Activated naive CD4-positive, alpha-beta T cell treated with anti-CD3 and anti-CD28 coated beads for 36 hours (primary cell): ENCODE measurements at regions of chr17 and their contacts with region 1.

Region 1: GRCh38 chr17:5191541-5192417 is at the start of gene ZNF594:
- DNase-seq: peak; percentile 98
- H3K4me3 Mint-ChIP-seq: peak within 1 kb of the TSS; percentile 90
- H3K27ac Mint-ChIP-seq: peak within 1 kb of the TSS; percentile 82
- H3K4me1 Mint-ChIP-seq: peaks cover 31% of the 10 kb centered on the region
- H3K27me3 Mint-ChIP-seq: no peaks in the 10 kb centered on the region
- total RNA-seq, gene ZNF594: 3.9 to 4.1 TPM

Region 2: DNA sequence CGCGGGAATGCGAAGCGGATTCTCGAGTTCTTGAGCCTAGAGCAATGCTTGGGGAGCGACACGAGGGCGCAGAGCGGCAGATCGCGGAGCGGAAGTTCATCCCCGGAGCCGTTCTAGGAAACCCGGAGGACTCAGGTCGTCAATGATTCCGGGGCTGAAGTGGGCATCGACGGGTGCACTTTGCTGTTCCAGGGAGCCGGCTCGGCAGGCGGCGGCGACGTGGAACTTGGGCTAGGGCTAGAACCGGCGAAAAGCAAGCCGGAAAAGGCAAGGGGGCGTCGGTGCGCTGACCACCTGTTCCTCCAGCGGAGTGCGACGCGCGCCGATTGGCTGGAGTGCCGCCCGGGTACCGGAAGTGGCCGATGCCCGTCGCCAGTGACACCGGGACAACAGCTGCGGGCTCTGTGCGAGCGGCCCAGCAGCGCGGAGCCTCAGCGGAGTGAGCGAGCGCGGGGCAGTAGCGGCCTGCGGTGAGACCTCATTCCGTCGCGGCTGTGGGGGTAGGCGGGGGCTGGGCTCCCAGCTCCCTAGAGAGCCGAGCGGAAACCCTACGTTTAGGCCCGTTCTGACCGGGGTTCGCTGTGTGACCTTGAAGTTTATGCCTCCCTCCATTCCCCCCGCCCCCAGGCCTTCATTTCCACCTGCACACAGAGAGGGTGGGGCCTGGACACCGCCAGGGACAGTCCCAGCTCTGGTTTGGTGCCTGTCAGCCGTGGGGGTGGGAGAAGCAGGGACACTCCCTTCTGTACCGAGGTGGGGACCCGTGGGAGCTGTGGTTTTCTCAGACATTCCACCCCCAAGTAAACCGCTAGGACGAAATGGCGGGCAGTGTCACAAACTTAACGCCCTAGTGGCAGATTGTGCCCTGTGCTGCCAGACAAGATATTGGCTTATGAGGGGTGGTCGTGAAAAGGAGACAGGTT is 113.4 kb before region 1 on chr17 and contains the start of gene ZFP3:
- CTCF ChIA-PET with region 1: interaction called, 4 read pairs
- intact Hi-C with region 1: loop called (anchors 5 kb)
- DNase-seq: peak; percentile 80
- H3K4me3 Mint-ChIP-seq: peak within 1 kb of the TSS; percentile 89
- H3K27ac Mint-ChIP-seq: peak within 1 kb of the TSS; percentile 85
- H3K4me1 Mint-ChIP-seq: peaks cover 22% of the 10 kb centered on the region
- H3K27me3 Mint-ChIP-seq: no peaks in the 10 kb centered on the region
- total RNA-seq, gene ZFP3: 0.62 to 0.83 TPM

Region 3: DNA sequence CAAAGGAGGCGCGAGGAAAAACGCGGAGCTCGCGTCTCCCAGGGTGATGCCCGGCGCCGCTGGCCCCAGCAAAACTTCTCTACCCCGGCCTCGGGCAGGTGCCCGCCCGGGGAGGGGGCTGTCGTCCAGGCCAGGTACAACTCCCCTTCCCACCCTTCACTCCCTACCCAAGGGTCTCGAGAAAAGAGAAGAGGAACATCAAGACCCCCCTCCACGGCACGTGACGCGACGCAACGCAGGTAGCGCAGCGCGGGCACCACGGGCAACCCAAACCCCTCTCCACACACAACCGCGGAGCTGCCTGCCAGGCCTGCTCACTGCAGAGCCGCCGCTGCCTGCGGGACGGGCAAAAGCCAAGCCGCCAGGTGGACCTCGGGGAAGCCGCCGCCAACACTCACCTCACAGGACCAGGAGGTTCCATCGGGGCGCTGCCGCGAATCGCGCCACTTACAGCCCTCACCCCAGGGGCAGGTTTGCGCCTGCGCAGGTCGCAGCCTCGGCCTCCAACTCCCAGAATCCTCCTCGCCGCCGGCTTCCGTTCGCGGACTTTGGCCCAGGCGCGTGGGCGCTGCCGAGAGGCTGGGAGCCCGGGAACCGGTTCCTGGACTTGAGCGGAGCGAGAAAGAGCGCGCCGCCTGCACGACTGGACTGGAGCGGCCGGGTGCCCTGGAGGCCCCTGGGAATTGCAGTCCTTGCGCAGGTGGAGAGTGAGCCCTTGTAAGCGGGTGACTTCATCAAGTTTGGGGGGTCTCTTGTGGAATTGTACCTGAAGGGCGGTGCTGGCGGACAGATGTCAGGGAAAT is 80.2 kb before region 1 on chr17 and contains the start of gene ZNF232:
- CTCF ChIA-PET with region 1: no interaction called
- intact Hi-C with region 1: loop called (anchors 1 kb)
- DNase-seq: peak; percentile 95
- H3K4me3 Mint-ChIP-seq: peak within 1 kb of the TSS; percentile 89
- H3K27ac Mint-ChIP-seq: peak within 1 kb of the TSS; percentile 81
- H3K4me1 Mint-ChIP-seq: peaks cover 27% of the 10 kb centered on the region
- H3K27me3 Mint-ChIP-seq: peaks cover 16% of the 10 kb centered on the region
- total RNA-seq, gene ZNF232: 9.1 to 9.5 TPM

Region 4: DNA sequence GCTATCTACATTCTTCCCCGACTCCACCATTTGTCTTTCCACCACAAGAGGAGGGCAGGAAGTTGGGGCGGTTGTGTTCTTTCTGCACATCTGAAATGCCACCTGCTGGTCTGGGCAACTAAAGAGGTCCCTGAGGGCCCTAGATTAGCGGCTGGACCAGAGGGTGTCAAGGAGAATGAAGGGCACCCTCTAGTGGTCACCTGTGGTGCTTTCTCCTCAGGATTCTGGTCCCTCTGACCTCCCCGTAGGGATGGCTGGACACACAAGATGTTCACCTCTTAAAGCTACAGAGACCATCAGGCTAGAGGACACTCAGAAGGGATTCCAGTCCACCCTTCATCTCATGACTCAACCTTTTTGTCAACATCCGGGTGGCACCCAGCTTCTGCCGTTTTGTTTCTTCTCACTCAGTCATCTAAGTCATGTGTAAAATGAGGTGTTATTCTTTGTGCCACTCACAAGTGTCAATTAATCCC is 45.8 kb after region 1 on chr17:
- CTCF ChIA-PET with region 1: interaction called, 10 read pairs
- intact Hi-C with region 1: loop called (anchors 1 kb)
- DNase-seq: peak; percentile 69
- H3K4me3 Mint-ChIP-seq: no peak overlapping the region
- H3K27ac Mint-ChIP-seq: no peak overlapping the region
- H3K4me1 Mint-ChIP-seq: peaks cover 23% of the 10 kb centered on the region
- H3K27me3 Mint-ChIP-seq: no peaks in the 10 kb centered on the region

Region 5: GRCh38 chr17:5281814-5282653 is 90.3 kb after region 1 on chr17 and contains the start of gene RABEP1:
- CTCF ChIA-PET with region 1: no interaction called
- intact Hi-C with region 1: loop called (anchors 2 kb)
- DNase-seq: peak; percentile 94
- H3K4me3 Mint-ChIP-seq: peak within 1 kb of the TSS; percentile 91
- H3K27ac Mint-ChIP-seq: peak within 1 kb of the TSS; percentile 88
- H3K4me1 Mint-ChIP-seq: peaks cover 38% of the 10 kb centered on the region
- H3K27me3 Mint-ChIP-seq: no peaks in the 10 kb centered on the region
- total RNA-seq, gene RABEP1: 57.9 to 59.3 TPM

Region 6: GRCh38 chr17:5419356-5419958 is 227.7 kb after region 1 on chr17 and contains the start of gene NUP88:
- CTCF ChIA-PET with region 1: no interaction called
- intact Hi-C with region 1: loop called (anchors 5 kb)
- DNase-seq: peak; percentile 97
- H3K4me3 Mint-ChIP-seq: peak within 1 kb of the TSS; percentile 100
- H3K27ac Mint-ChIP-seq: peak within 1 kb of the TSS; percentile 100
- H3K4me1 Mint-ChIP-seq: peaks cover 50% of the 10 kb centered on the region
- H3K27me3 Mint-ChIP-seq: no peaks in the 10 kb centered on the region
- total RNA-seq, gene NUP88: 115 to 131 TPM